MCF 10A (cell line): ENCODE measurements at regions of chr1 and their contacts with region 1.

Region 1: GRCh38 chr1:26921540-26922430 is at the start of gene NUDC:
- DNase-seq: peak; percentile 97
- H3K4me3 Mint-ChIP-seq: peak within 1 kb of the TSS; percentile 98
- H3K27ac Mint-ChIP-seq: peak within 1 kb of the TSS; percentile 97
- H3K4me1 Mint-ChIP-seq: peaks cover 17% of the 10 kb centered on the region
- H3K27me3 Mint-ChIP-seq: no peaks in the 10 kb centered on the region
- CTCF ChIP-seq: no peak
- total RNA-seq, gene NUDC: 96.8 and 106 TPM in 2 replicates

Region 2: GRCh38 chr1:26889551-26890466 is 32.0 kb before region 1 on chr1 and contains the start of gene GPN2:
- CTCF ChIA-PET with region 1: no interaction called
- POLR2A ChIA-PET with region 1: interaction called, 12 read pairs
- intact Hi-C with region 1: no loop called
- DNase-seq: peak; percentile 75
- H3K4me3 Mint-ChIP-seq: peak within 1 kb of the TSS; percentile 91
- H3K27ac Mint-ChIP-seq: peak within 1 kb of the TSS; percentile 93
- H3K4me1 Mint-ChIP-seq: peaks cover 23% of the 10 kb centered on the region
- H3K27me3 Mint-ChIP-seq: no peaks in the 10 kb centered on the region
- CTCF ChIP-seq: no peak
- total RNA-seq, gene GPN2: 38.9 and 39.7 TPM in 2 replicates

Region 3: DNA sequence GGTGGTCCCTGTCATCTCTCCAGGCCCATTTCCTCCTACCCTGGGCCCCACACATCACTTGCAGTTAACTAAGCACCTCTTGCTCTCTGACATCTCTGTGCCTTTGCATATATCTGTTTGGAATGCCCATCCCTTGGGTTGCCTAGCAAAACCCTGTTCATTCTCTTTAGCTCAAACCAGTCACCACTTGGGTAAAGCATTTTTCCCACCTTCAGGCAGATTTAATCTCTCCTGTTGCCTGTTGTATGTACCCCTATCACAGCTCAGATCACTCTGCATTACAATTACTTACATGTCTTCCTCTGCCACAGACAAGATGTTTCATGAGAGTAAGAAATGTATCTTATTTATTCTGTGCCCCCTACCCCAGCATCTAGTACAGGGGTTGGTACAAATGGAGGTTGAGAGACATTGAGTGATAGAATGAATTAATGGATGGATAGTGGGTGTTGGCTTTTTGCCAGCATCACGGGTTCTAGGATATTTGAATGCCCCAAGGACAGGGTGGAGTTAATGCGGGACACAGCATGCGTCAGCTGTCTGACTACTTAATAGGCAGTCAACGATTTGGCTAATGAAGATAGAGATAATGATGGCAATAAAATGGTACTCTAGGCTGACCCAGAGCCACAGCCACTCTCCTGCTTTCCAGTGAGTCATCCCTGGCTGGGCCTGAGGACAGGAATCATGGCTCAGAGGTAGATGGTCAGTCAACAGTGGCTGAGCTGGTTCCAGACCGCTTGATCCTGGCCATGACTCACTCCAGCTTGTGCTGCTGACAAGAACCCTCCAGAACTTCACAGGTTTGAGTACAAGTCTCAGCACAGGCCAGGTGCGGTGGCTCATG is 14.5 kb before region 1 on chr1:
- CTCF ChIA-PET with region 1: interaction called, 4 read pairs
- POLR2A ChIA-PET with region 1: interaction called, 5 read pairs
- intact Hi-C with region 1: loop called (anchors 2 kb)
- DNase-seq: peak; percentile 88
- H3K4me3 Mint-ChIP-seq: no peak overlapping the region
- H3K27ac Mint-ChIP-seq: peak overlapping the region; percentile 6
- H3K4me1 Mint-ChIP-seq: peaks cover 15% of the 10 kb centered on the region
- H3K27me3 Mint-ChIP-seq: no peaks in the 10 kb centered on the region
- CTCF ChIP-seq: no peak